ENCODE measurements at regions of chr6 and their contacts with region 1.

Region 1: DNA sequence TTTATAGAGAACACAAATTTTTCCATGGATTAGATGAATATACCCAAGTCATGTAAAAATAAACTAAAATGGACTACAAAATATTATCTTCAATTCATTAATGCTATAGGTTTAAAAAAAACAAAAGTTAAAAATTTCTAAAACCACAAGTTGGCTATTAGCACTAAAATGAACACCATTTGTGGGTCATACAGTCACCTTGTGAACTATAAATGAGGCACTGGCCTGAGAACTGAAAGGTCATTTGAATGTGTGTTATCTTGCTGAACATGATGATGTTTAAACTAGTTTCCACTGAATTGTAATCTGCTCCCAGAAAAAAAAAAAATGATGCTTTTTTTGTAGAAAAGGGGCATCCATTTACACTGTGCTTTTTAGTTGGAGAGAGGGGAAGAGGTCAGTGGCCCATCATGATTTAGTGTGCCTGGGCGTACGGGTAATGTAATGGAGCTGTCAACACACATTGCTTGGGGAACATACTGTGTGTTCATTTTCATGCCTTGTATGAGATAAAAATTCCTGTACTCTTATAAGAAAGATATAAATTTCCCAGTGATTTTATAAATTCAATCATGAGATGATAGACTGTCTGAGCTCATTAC is 96.6 kb upstream of the FKBP1C start:
- DNase-seq: no peak
- H3K4me3 ChIP-seq: no peak overlapping the region
- H3K27ac ChIP-seq: no peak overlapping the region
- H3K4me1 ChIP-seq: no peaks in the 10 kb centered on the region
- H3K27me3 ChIP-seq: no peaks in the 10 kb centered on the region
- CTCF ChIP-seq: no peak

Region 2: GRCh38 chr6:63023726-63024125 is 91.0 kb before region 1 on chr6:
- intact Hi-C with region 1: no loop called
- DNase-seq: no peak
- H3K4me3 ChIP-seq: no peak overlapping the region
- H3K27ac ChIP-seq: no peak overlapping the region
- H3K4me1 ChIP-seq: no peaks in the 10 kb centered on the region
- H3K27me3 ChIP-seq: no peaks in the 10 kb centered on the region
- CTCF ChIP-seq: no peak

Region 3: GRCh38 chr6:63149730-63150129 is 35.0 kb after region 1 on chr6:
- intact Hi-C with region 1: loop called (anchors 1 kb)
- DNase-seq: no peak
- H3K4me3 ChIP-seq: no peak overlapping the region
- H3K27ac ChIP-seq: no peak overlapping the region
- H3K4me1 ChIP-seq: no peaks in the 10 kb centered on the region
- H3K27me3 ChIP-seq: no peaks in the 10 kb centered on the region
- CTCF ChIP-seq: no peak